ENCODE measurements at regions of chr15 and their contacts with region 1.

Region 1: GRCh38 chr15:43776718-43777583 is at the start of gene ELL3:
- DNase-seq: peak; percentile 83
- ATAC-seq: peak; percentile 65
- H3K4me3 ChIP-seq: peak within 1 kb of the TSS; percentile 83
- H3K27ac ChIP-seq: peak within 1 kb of the TSS; percentile 63
- H3K4me1 ChIP-seq: peaks cover 17% of the 10 kb centered on the region; the same call in 1 of the 2 replicates
- H3K27me3 ChIP-seq: no peaks in the 10 kb centered on the region
- CTCF ChIP-seq: peak; percentile 94
- total RNA-seq, gene ELL3: 15.0 and 35.8 TPM in 2 replicates

Region 2: GRCh38 chr15:43749690-43750345 is 27.1 kb before region 1 on chr15:
- CTCF ChIA-PET with region 1: no interaction called
- POLR2A ChIA-PET with region 1: no interaction called
- intact Hi-C with region 1: loop called (anchors 1 kb)
- DNase-seq: no peak
- ATAC-seq: no peak
- H3K4me3 ChIP-seq: no peak overlapping the region; the same call in 1 of the 2 replicates
- H3K27ac ChIP-seq: no peak overlapping the region
- H3K4me1 ChIP-seq: peaks cover 16% of the 10 kb centered on the region
- H3K27me3 ChIP-seq: no peaks in the 10 kb centered on the region
- CTCF ChIP-seq: no peak

Region 3: GRCh38 chr15:43791993-43792760 is 15.2 kb after region 1 on chr15 and contains the start of gene SERF2:
- CTCF ChIA-PET with region 1: no interaction called
- POLR2A ChIA-PET with region 1: interaction called, 3 read pairs
- intact Hi-C with region 1: loop called (anchors 2 kb)
- DNase-seq: peak; percentile 99
- ATAC-seq: peak; percentile 96
- H3K4me3 ChIP-seq: peak within 1 kb of the TSS; percentile 96
- H3K27ac ChIP-seq: peak within 1 kb of the TSS; percentile 74
- H3K4me1 ChIP-seq: peaks cover 36% of the 10 kb centered on the region
- H3K27me3 ChIP-seq: no peaks in the 10 kb centered on the region
- CTCF ChIP-seq: no peak
- total RNA-seq, gene SERF2: 665 and 756 TPM in 2 replicates

Region 4: DNA sequence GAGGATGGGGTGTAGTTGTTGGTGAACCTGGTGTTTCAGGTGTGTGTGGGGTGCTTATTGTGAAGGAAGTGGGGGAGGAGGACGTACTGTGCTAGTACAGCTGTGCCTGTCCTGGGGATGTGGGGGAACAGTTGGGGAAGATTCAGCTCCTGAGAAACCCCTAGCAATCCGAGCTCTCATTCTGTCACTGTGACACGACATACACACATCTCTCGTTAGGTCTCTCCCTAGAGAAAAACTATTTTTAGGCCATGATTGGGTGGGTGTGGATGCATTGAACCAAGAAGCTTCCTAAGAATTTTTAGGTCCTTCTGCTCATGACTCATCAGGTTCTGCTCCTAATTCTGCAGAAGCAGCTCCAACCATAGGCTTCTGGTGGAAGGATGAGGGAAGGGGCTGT is 1691.3 kb after region 1 on chr15:
- CTCF ChIA-PET with region 1: no interaction called
- POLR2A ChIA-PET with region 1: no interaction called
- intact Hi-C with region 1: no loop called
- DNase-seq: no peak
- ATAC-seq: no peak
- H3K4me3 ChIP-seq: no peak overlapping the region
- H3K27ac ChIP-seq: no peak overlapping the region
- H3K4me1 ChIP-seq: no peaks in the 10 kb centered on the region
- H3K27me3 ChIP-seq: no peaks in the 10 kb centered on the region
- CTCF ChIP-seq: no peak

Measured in PC-3 (cell line).